Activated CD4-positive, alpha-beta T cell treated with anti-CD3 and anti-CD28 coated beads for 36 hours (primary cell): ENCODE measurements at regions of chr5 and their contacts with region 1.

Region 1: GRCh38 chr5:129593525-129593924 is 133.4 kb downstream of the ADAMTS19 start:
- DNase-seq: no peak
- ATAC-seq: no peak
- H3K4me3 Mint-ChIP-seq: no peak overlapping the region
- H3K27ac Mint-ChIP-seq: no peak overlapping the region
- H3K4me1 Mint-ChIP-seq: no peaks in the 10 kb centered on the region
- H3K27me3 Mint-ChIP-seq: no peaks in the 10 kb centered on the region

Region 2: GRCh38 chr5:129199308-129199707 is 394.2 kb before region 1 on chr5:
- CTCF ChIA-PET with region 1: no interaction called
- POLR2A ChIA-PET with region 1: no interaction called
- intact Hi-C with region 1: loop called in 1 of 2 experiments (anchors 10 kb)
- DNase-seq: no peak
- ATAC-seq: no peak
- H3K4me3 Mint-ChIP-seq: no peak overlapping the region
- H3K27ac Mint-ChIP-seq: no peak overlapping the region
- H3K4me1 Mint-ChIP-seq: no peaks in the 10 kb centered on the region
- H3K27me3 Mint-ChIP-seq: no peaks in the 10 kb centered on the region

Region 3: GRCh38 chr5:129631961-129632360 is 38.4 kb after region 1 on chr5:
- CTCF ChIA-PET with region 1: no interaction called
- POLR2A ChIA-PET with region 1: no interaction called
- intact Hi-C with region 1: no loop called
- DNase-seq: no peak
- ATAC-seq: no peak
- H3K4me3 Mint-ChIP-seq: no peak overlapping the region
- H3K27ac Mint-ChIP-seq: no peak overlapping the region
- H3K4me1 Mint-ChIP-seq: no peaks in the 10 kb centered on the region
- H3K27me3 Mint-ChIP-seq: no peaks in the 10 kb centered on the region